ENCODE measurements at regions of chr17 and their contacts with region 1.

Region 1: DNA sequence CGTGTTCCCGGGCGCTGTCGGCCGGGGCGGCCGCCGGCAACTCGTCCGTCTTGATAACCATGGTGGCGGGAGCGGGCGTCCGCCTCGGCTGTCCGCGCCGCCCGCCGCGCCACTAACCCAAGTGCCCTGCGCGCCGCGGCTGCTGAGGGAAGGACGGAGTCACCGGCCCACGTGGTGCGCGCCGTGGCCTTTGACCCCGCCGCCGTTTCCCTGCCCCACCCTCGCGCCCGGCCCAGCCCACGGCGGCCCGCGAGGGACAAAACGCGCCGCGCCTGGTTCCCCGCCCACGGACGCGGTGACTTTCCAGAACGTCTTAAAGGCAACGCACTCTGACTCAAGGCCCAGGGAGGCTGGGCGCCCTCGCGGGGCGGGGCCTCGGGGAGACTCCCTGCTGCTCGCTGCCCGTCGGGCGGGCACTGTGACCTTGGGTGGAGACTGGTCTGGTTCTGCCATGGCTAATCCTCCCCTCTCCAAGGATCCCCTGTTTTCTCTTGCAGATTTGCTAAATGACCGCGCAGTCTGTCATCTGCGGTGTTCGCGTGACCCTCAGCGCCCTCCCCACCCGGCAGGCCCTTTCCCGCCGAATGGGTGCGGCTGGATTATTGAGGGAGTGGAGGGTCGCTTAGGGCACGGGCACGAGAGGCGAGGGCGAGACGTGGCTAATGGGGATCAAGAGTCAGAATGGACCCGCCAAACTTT is at the start of gene CLUH:
- DNase-seq: peak; percentile 91 to 97 (median 94)
- H3K4me3 ChIP-seq: peak within 1 kb of the TSS; percentile 55 to 98 (median 89)
- H3K27ac ChIP-seq: peak within 1 kb of the TSS; percentile 35 to 96 (median 87)
- H3K27me3 ChIP-seq: no peaks in the 10 kb centered on the region
- CTCF ChIP-seq: peak in 41 of 56 donors; percentile 7 to 59 (median 36)
- total RNA-seq, gene CLUH: 46.1 to 95.4 (median 67.1) TPM

Region 2: DNA sequence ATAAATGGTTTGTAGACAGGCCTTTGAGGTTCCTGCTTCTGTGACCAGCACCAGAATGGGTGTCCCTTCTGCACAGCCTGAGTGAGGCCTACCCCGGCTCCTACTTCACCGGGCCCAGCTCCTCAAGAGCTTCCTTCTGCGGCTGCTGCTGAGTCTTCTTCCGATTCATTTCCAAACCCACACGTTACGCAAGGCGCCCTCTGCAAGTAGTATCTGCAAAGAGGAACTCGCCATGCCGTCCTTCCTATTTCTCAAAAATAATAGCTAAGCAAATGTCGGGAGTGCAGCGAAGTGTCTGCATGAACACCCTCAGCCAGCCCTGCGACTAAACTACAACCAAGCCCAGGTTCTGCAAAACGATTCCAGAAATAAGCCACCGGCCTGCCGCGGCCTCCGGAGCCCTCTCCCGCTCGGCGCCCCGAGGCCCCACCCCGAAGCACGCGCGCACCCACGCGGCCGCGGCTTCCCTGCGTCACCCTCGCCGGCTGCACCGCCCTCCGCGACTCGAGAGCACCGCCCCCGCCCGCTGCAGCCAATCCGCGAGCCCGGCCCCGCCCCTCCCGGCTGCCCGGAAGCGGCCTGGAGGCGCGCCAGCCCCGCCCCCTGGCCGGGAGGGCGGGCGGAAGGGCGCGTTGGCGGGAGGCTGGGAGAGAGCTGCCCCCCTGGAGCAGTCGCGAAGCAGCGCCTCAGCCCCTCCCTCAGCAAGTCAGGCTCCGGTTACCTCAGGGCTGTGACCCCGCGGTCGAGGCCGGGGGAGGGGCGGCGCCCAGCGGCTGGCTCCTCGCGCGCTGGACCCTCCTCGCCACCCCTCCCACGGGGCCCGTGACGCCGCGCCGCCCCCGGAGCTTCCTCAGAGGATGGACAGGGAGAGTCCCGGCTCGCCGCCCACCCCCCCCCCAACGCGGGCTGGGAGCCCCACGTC is 319.2 kb before region 1 on chr17:
- intact Hi-C with region 1: loop called (anchors 5 kb)
- DNase-seq: peak; percentile 89 to 98 (median 96)
- H3K4me3 ChIP-seq: peak overlapping the region; percentile 45 to 96 (median 83)
- H3K27ac ChIP-seq: peak overlapping the region; percentile 66 to 100 (median 97)
- H3K27me3 ChIP-seq: no peaks in the 10 kb centered on the region
- CTCF ChIP-seq: peak in 15 of 56 donors; percentile 3 to 31 (median 16)